ENCODE measurements at regions of chr5 and their contacts with region 1.

Region 1: DNA sequence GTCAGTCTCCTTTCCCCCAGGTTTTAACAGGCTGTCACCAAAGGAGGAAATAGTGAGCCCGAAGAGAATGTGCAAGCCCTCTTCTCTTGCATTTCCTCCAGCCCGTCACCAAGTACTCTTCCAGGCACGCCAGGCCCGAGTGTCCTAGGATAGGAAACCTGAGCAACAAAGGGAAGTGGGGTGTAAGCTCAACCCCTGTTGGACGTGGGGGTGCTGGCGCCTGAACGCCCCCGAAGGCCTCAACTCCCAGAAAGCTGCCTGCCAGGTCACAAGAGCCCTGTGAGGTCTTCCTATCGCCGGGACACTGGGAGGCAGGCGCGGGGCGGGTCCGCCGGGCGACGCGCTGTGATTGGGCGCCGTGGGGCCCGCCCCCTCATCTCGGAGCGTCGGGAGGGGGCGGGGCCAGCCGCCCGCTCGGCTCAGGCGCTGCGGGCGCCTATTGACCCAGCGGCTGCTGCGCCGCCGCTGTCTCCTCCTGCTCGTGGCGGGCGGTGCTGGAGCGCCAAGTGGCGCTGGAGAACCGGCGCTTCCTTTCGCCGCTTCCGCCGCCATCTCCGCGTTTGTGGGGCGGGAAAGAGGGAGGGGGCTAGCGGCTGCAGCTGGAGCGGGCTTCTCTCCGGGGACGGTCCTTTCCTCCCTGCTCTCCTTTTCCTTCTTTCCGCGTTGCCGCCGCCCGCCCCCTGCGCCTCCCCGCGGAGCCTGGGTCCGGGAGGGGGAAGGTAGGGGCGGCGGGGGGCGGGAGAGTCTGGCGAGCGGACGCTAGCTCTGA is 572 bp upstream of the MAN2A1 start:
- DNase-seq: peak; percentile 84
- ATAC-seq: peak; percentile 89
- H3K4me3 ChIP-seq: peak overlapping the region; percentile 81
- H3K27ac ChIP-seq: peak overlapping the region; percentile 90
- H3K4me1 ChIP-seq: peaks cover 12% of the 10 kb centered on the region
- H3K27me3 ChIP-seq: no peaks in the 10 kb centered on the region
- CTCF ChIP-seq: peak; percentile 15; the same call in 1 of the 2 replicates
- POLR2A ChIP-seq: peak; percentile 71; the same call in 1 of the 2 replicates
- RAD21 ChIP-seq: 0 out of 2 replicates have a peak, but pooled peaks have one; percentile 26

Region 2: DNA sequence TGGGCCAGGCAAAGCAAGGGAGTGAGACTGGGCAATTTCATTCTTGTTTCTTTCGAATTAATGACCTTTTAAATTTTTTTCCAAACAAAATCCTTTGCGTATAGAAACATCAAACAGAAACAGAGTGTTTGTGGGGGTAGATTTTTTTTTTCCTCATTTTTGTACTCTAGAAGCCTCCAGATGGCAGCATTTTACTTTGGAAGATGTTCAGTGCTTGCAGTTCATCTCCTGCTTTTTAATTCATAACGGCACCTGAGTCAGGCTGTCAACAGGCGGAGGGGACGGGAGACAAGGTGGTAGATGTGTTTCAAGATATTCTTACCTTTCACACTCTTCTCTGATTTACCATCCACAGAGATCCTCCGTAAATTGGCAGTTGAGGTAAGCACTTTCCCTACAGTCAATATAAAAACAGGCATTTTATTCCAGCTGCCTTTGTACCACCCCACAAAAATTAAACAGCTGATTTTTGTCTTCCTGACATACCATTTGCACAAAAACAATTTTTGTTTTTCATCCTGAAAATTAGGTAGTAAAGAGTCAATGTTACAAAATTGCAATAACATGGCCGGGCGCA is 1207.7 kb before region 1 on chr5:
- CTCF ChIA-PET with region 1: no interaction called
- POLR2A ChIA-PET with region 1: no interaction called
- dilution Hi-C with region 1: no loop called
- in situ Hi-C with region 1: no loop called
- intact Hi-C with region 1: loop called (anchors 10 kb)
- DNase-seq: peak; percentile 42
- ATAC-seq: peak; percentile 59; the same call in 1 of the 2 replicates
- H3K4me3 ChIP-seq: no peak overlapping the region
- H3K27ac ChIP-seq: no peak overlapping the region
- H3K4me1 ChIP-seq: no peaks in the 10 kb centered on the region
- H3K27me3 ChIP-seq: no peaks in the 10 kb centered on the region; the same call in 1 of the 2 replicates
- CTCF ChIP-seq: peak; percentile 55
- POLR2A ChIP-seq: no peak
- RAD21 ChIP-seq: peak; percentile 64

Region 3: GRCh38 chr5:108748401-108749127 is 940.6 kb before region 1 on chr5:
- CTCF ChIA-PET with region 1: no interaction called
- POLR2A ChIA-PET with region 1: no interaction called
- dilution Hi-C with region 1: no loop called
- in situ Hi-C with region 1: no loop called
- intact Hi-C with region 1: loop called (anchors 10 kb)
- DNase-seq: peak; percentile 99
- ATAC-seq: peak; percentile 95
- H3K4me3 ChIP-seq: peak overlapping the region; percentile 83
- H3K27ac ChIP-seq: peak overlapping the region; percentile 91
- H3K4me1 ChIP-seq: 0 out of 2 replicates have a peak, but pooled peaks cover under 1% of the 10 kb centered on the region
- H3K27me3 ChIP-seq: no peaks in the 10 kb centered on the region
- CTCF ChIP-seq: 0 out of 2 replicates have a peak, but pooled peaks have one; percentile 10
- POLR2A ChIP-seq: peak; percentile 98
- RAD21 ChIP-seq: peak; percentile 18

Region 4: DNA sequence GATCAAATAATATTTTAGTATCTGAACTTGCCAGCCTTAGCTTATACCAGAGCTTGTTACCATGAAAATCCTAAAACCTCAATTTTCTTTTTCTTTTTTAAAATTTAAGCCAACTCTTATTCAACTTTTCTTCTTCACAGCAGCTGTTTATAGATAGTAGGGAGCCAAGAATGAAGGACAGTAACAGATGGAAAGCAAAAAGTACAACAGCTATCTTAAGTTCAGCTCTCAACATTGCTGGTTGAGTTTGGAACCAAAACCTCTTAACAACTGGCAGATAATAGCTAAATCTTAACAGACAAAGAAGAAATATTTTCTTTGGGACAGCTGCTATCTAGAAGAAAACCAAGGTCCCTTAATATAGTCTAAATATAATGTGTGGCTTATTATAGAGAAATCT is 354.0 kb before region 1 on chr5:
- CTCF ChIA-PET with region 1: no interaction called
- POLR2A ChIA-PET with region 1: no interaction called
- dilution Hi-C with region 1: no loop called
- in situ Hi-C with region 1: no loop called
- intact Hi-C with region 1: no loop called
- DNase-seq: no peak
- ATAC-seq: no peak
- H3K4me3 ChIP-seq: no peak overlapping the region
- H3K27ac ChIP-seq: no peak overlapping the region
- H3K4me1 ChIP-seq: no peaks in the 10 kb centered on the region
- H3K27me3 ChIP-seq: no peaks in the 10 kb centered on the region
- CTCF ChIP-seq: no peak
- POLR2A ChIP-seq: no peak
- RAD21 ChIP-seq: no peak

Region 5: GRCh38 chr5:109743770-109744212 is 54.6 kb after region 1 on chr5:
- CTCF ChIA-PET with region 1: interaction called, 3 read pairs
- POLR2A ChIA-PET with region 1: interaction called, 3 read pairs
- dilution Hi-C with region 1: no loop called
- in situ Hi-C with region 1: no loop called
- intact Hi-C with region 1: loop called (anchors 2 kb)
- DNase-seq: peak; percentile 95
- ATAC-seq: peak; percentile 85
- H3K4me3 ChIP-seq: no peak overlapping the region
- H3K27ac ChIP-seq: peak overlapping the region; percentile 88
- H3K4me1 ChIP-seq: peaks cover 22% of the 10 kb centered on the region
- H3K27me3 ChIP-seq: no peaks in the 10 kb centered on the region
- CTCF ChIP-seq: no peak
- POLR2A ChIP-seq: no peak
- RAD21 ChIP-seq: no peak

Region 6: DNA sequence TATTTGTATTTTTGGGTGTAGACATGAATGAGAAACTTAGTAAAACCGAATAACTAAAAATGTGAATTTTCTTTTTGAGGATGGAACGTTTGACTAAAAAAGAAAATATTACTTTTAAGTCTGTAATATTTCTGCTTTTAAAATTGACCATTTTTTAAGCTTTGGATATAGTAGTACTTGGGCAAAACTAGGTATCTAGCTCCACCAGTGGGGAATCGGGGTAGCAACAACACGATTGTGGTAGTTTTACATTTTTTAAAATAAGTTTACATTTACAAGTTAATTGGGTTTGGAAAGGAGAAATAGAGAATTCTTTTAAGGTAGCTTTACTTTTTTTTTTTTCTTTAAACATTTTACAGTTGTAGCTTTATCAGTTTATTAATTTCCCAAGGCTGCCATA is 155.0 kb after region 1 on chr5:
- CTCF ChIA-PET with region 1: no interaction called
- POLR2A ChIA-PET with region 1: no interaction called
- dilution Hi-C with region 1: no loop called
- in situ Hi-C with region 1: no loop called
- intact Hi-C with region 1: loop called (anchors 5 kb)
- DNase-seq: peak; percentile 28
- ATAC-seq: no peak
- H3K4me3 ChIP-seq: no peak overlapping the region
- H3K27ac ChIP-seq: no peak overlapping the region
- H3K4me1 ChIP-seq: 0 out of 2 replicates have a peak, but pooled peaks cover 2% of the 10 kb centered on the region
- H3K27me3 ChIP-seq: no peaks in the 10 kb centered on the region
- CTCF ChIP-seq: peak; percentile 46
- POLR2A ChIP-seq: no peak
- RAD21 ChIP-seq: peak; percentile 57

Region 7: DNA sequence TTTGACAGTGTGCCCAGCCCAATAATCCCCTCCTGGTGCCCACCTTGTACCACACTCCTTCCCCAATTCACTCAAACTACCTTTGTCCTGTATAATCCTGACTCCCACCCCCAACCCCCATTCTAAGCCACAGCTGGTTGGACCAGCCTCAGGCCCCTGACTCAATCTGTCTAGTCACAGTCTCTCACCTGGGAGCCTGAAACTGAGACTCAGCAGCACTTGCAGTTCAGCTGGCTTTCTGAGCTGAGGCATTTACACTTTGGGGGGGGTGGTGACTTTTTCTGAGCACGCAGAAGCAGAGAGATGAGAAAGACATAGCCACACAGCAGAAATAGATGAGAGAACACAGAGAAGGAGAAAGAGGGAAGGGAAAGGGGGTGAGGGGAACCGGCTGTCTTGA is 247.8 kb after region 1 on chr5:
- CTCF ChIA-PET with region 1: no interaction called
- POLR2A ChIA-PET with region 1: no interaction called
- dilution Hi-C with region 1: no loop called
- in situ Hi-C with region 1: no loop called
- intact Hi-C with region 1: no loop called
- DNase-seq: no peak
- ATAC-seq: no peak
- H3K4me3 ChIP-seq: no peak overlapping the region
- H3K27ac ChIP-seq: no peak overlapping the region
- H3K4me1 ChIP-seq: no peaks in the 10 kb centered on the region
- H3K27me3 ChIP-seq: no peaks in the 10 kb centered on the region; the same call in 1 of the 2 replicates
- CTCF ChIP-seq: no peak
- POLR2A ChIP-seq: no peak
- RAD21 ChIP-seq: no peak

Region 8: DNA sequence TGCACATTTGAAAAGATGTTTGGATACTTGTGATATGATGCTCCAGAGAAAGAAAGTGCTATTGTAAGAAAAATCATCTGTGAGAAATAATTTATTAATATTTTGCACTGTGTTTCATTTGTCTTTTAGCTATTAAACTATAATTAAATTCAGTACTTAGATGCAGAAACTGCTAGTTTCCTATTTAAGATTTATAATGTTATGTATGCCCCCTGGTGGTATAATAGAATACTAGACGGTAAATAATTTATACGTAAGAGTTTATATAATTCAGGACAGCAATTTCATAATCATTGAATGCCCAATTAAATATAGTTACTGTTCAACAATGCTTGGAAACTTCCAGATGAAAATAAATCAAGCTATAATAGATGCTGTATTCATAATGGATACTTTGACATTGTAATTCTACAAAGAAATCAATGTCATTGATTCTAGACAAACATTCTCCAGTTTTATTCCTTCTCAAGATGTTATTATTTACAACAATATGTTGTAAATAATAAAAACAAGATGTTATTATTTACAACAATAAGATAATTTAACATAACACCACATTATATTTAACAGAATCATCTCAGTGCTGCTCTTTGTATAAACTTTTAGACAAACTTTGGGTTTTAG is 936.3 kb after region 1 on chr5:
- CTCF ChIA-PET with region 1: interaction called, 4 read pairs
- POLR2A ChIA-PET with region 1: no interaction called
- dilution Hi-C with region 1: no loop called
- in situ Hi-C with region 1: loop called (anchors 25 kb)
- intact Hi-C with region 1: loop called (anchors 5 kb)
- DNase-seq: peak; percentile 52
- ATAC-seq: peak; percentile 58; the same call in 1 of the 2 replicates
- H3K4me3 ChIP-seq: no peak overlapping the region
- H3K27ac ChIP-seq: no peak overlapping the region
- H3K4me1 ChIP-seq: no peaks in the 10 kb centered on the region; the same call in 1 of the 2 replicates
- H3K27me3 ChIP-seq: no peaks in the 10 kb centered on the region
- CTCF ChIP-seq: peak; percentile 57
- POLR2A ChIP-seq: no peak
- RAD21 ChIP-seq: peak; percentile 34